GM12878 (cell line): ENCODE measurements at regions of chr2 and their contacts with region 1.

Region 1: GRCh38 chr2:7203055-7203467 is 285.8 kb downstream of the RNF144A start:
- DNase-seq: peak; percentile 16
- ATAC-seq: peak; percentile 86
- H3K4me3 ChIP-seq: no peak overlapping the region
- H3K27ac ChIP-seq: no peak overlapping the region
- H3K4me1 ChIP-seq: no peaks in the 10 kb centered on the region
- H3K27me3 ChIP-seq: no peaks in the 10 kb centered on the region
- CTCF ChIP-seq: peak; percentile 77 to 96 (median 88)
- EP300 ChIP-seq: no peak
- POLR2A ChIP-seq: no peak
- RAD21 ChIP-seq: peak; percentile 85

Region 2: GRCh38 chr2:7097348-7097895 is 105.6 kb before region 1 on chr2:
- CTCF ChIA-PET with region 1: interaction called, 15 read pairs
- POLR2A ChIA-PET with region 1: no interaction called
- RAD21 ChIA-PET with region 1: interaction called, 5 read pairs
- SMC1A ChIA-PET with region 1: interaction called, 4 read pairs
- in situ Hi-C with region 1: no loop called
- intact Hi-C with region 1: loop called (anchors 1 kb)
- DNase-seq: peak; percentile 35
- ATAC-seq: peak; percentile 98
- H3K4me3 ChIP-seq: peak overlapping the region; percentile 48; the same call in 1 of the 2 replicates
- H3K27ac ChIP-seq: no peak overlapping the region
- H3K4me1 ChIP-seq: peaks cover 4% of the 10 kb centered on the region; the same call in 1 of the 2 replicates
- H3K27me3 ChIP-seq: no peaks in the 10 kb centered on the region
- CTCF ChIP-seq: peak; percentile 97 to 99 (median 98); a peak in 5 of 6 replicates
- EP300 ChIP-seq: no peak
- POLR2A ChIP-seq: no peak
- RAD21 ChIP-seq: peak; percentile 84

Region 3: GRCh38 chr2:7363906-7364305 is 160.8 kb after region 1 on chr2:
- CTCF ChIA-PET with region 1: interaction called, 8 read pairs
- POLR2A ChIA-PET with region 1: no interaction called
- RAD21 ChIA-PET with region 1: no interaction called
- SMC1A ChIA-PET with region 1: interaction called, 4 read pairs
- in situ Hi-C with region 1: no loop called
- intact Hi-C with region 1: loop called (anchors 2 kb)
- DNase-seq: no peak
- ATAC-seq: no peak
- H3K4me3 ChIP-seq: no peak overlapping the region
- H3K27ac ChIP-seq: no peak overlapping the region
- H3K4me1 ChIP-seq: no peaks in the 10 kb centered on the region
- H3K27me3 ChIP-seq: no peaks in the 10 kb centered on the region
- CTCF ChIP-seq: peak; percentile 15 to 31 (median 23); a peak in 2 of 6 replicates
- EP300 ChIP-seq: no peak
- POLR2A ChIP-seq: no peak
- RAD21 ChIP-seq: no peak

Region 4: DNA sequence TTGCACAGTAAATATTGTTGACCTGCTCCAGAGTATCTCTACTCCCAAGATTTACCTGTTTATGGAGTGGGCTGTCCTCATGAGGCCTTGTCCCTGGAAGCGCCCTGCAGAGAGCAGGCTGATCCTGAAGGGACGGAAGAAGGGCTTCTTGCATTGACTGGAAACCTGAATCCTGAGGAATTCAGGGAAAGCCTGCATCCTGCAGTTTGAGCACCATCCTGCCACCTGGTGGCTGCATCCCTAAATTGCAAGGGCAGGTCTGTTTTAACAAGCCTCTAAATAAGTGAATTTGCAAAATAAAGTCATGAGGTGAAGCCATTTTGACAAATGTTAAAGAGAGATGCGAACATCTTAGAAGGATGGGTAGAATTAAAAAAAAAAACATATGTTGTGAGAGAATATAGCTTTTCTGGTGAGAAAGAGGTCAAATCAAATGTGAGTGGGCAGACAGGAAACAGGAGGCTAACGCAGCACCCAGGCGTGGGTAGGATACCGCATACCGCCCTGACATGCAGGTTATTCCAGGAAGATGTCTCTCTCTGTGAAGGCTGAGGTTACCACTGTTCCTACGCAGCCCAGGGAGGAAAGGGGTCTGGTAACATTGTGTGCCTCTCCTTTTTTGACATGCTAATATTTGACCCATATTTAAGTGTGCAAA is 469.1 kb after region 1 on chr2:
- CTCF ChIA-PET with region 1: interaction called, 5 read pairs
- POLR2A ChIA-PET with region 1: no interaction called
- RAD21 ChIA-PET with region 1: no interaction called
- SMC1A ChIA-PET with region 1: interaction called, 3 read pairs
- in situ Hi-C with region 1: no loop called
- intact Hi-C with region 1: loop called (anchors 10 kb)
- DNase-seq: peak; percentile 35
- ATAC-seq: no peak
- H3K4me3 ChIP-seq: no peak overlapping the region
- H3K27ac ChIP-seq: no peak overlapping the region
- H3K4me1 ChIP-seq: no peaks in the 10 kb centered on the region
- H3K27me3 ChIP-seq: no peaks in the 10 kb centered on the region
- CTCF ChIP-seq: peak; percentile 40 to 76 (median 70)
- EP300 ChIP-seq: no peak
- POLR2A ChIP-seq: no peak
- RAD21 ChIP-seq: peak; percentile 47

Region 5: DNA sequence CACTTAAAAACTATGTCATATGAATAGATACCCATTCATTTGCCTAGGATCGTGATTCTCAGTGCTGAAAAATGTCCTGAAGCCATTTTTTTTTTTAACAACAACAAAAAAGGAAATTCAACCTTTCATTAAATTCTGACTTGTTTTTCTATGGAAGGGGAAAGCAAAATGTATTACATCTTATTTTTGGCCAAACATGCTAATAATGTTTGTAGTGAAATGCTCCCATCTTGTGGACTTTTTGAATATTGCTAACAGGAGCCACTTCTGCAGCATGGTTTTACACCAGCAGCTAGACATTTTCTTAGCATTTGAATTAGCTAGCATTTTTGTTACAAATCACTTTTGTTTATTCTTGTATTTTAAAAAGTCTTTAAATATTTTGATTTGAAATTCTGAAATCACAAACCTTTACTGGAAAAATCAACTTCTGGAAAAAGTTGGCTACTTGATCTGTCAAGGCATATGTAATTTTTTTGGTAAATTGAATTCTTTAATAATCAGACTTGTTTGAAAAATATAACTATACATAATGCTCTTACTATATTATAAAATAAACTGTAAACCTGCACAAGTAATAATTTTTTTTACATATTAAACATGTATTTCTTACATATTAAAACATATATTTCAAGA is 1558.6 kb after region 1 on chr2:
- CTCF ChIA-PET with region 1: interaction called, 6 read pairs
- POLR2A ChIA-PET with region 1: no interaction called
- RAD21 ChIA-PET with region 1: interaction called, 4 read pairs
- SMC1A ChIA-PET with region 1: interaction called, 4 read pairs
- in situ Hi-C with region 1: no loop called
- intact Hi-C with region 1: loop called (anchors 1 kb)
- DNase-seq: peak; percentile 35
- ATAC-seq: peak; percentile 65
- H3K4me3 ChIP-seq: no peak overlapping the region
- H3K27ac ChIP-seq: no peak overlapping the region
- H3K4me1 ChIP-seq: no peaks in the 10 kb centered on the region
- H3K27me3 ChIP-seq: no peaks in the 10 kb centered on the region
- CTCF ChIP-seq: peak; percentile 49 to 65 (median 56)
- EP300 ChIP-seq: no peak
- POLR2A ChIP-seq: no peak
- RAD21 ChIP-seq: peak; percentile 67